ENCODE measurements at regions of chr20 and their contacts with region 1.

Region 1: GRCh38 chr20:41339507-41340326 is 904 bp upstream of the LPIN3 start:
- DNase-seq: peak; percentile 99
- H3K4me3 Mint-ChIP-seq: peak overlapping the region; percentile 80
- H3K27ac Mint-ChIP-seq: peak overlapping the region; percentile 75
- H3K4me1 Mint-ChIP-seq: peaks cover 14% of the 10 kb centered on the region
- H3K27me3 Mint-ChIP-seq: no peaks in the 10 kb centered on the region
- CTCF ChIP-seq: peak; percentile 99

Region 2: GRCh38 chr20:40990542-40991120 is 349.1 kb before region 1 on chr20:
- CTCF ChIA-PET with region 1: interaction called, 10 read pairs
- intact Hi-C with region 1: no loop called
- DNase-seq: peak; percentile 91
- H3K4me3 Mint-ChIP-seq: no peak overlapping the region
- H3K27ac Mint-ChIP-seq: peak overlapping the region; percentile 70
- H3K4me1 Mint-ChIP-seq: peaks cover 18% of the 10 kb centered on the region
- H3K27me3 Mint-ChIP-seq: no peaks in the 10 kb centered on the region
- CTCF ChIP-seq: peak; percentile 85

Region 3: DNA sequence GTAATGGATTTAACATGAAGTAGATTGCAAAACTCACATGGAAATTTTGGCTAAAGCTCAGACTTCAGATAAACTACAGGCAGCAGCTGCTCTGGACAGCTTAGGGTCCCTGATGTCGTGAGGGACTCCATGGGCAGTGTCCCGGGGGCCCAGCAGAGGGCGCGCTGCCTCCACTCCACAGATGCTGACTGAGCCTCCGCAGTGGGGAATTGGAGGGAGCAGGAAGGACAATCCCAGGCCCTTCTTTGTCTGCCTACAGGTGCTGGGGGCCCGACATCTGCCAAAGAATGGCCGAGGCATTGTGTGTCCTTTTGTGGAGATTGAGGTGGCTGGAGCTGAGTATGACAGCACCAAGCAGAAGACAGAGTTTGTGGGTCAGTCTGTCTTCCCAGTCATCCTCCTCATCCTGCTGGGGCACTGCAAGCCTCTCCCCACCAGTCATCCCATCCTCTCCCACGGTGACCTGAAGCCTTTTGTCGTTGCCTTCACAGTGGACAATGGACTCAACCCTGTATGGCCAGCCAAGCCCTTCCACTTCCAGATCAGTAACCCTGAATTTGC is 166.5 kb before region 1 on chr20:
- CTCF ChIA-PET with region 1: interaction called, 99 read pairs
- intact Hi-C with region 1: loop called (anchors 1 kb)
- DNase-seq: peak; percentile 92
- H3K4me3 Mint-ChIP-seq: no peak overlapping the region
- H3K27ac Mint-ChIP-seq: no peak overlapping the region
- H3K4me1 Mint-ChIP-seq: no peaks in the 10 kb centered on the region
- H3K27me3 Mint-ChIP-seq: no peaks in the 10 kb centered on the region
- CTCF ChIP-seq: peak; percentile 96

Region 4: GRCh38 chr20:41317536-41318270 is 22.0 kb before region 1 on chr20 and contains the start of gene ZHX3:
- CTCF ChIA-PET with region 1: interaction called, 22 read pairs
- intact Hi-C with region 1: no loop called
- DNase-seq: peak; percentile 100
- H3K4me3 Mint-ChIP-seq: peak within 1 kb of the TSS; percentile 95
- H3K27ac Mint-ChIP-seq: peak within 1 kb of the TSS; percentile 72
- H3K4me1 Mint-ChIP-seq: peaks cover 38% of the 10 kb centered on the region
- H3K27me3 Mint-ChIP-seq: no peaks in the 10 kb centered on the region
- CTCF ChIP-seq: no peak
- total RNA-seq, gene ZHX3: 22.7 and 24.1 TPM in 2 replicates

Region 5: GRCh38 chr20:41364967-41365765 is 25.4 kb after region 1 on chr20:
- CTCF ChIA-PET with region 1: interaction called, 10 read pairs
- intact Hi-C with region 1: no loop called
- DNase-seq: no peak
- H3K4me3 Mint-ChIP-seq: no peak overlapping the region
- H3K27ac Mint-ChIP-seq: no peak overlapping the region
- H3K4me1 Mint-ChIP-seq: no peaks in the 10 kb centered on the region
- H3K27me3 Mint-ChIP-seq: peaks cover 72% of the 10 kb centered on the region
- CTCF ChIP-seq: no peak